Ascending aorta (tissue), 2 donors: ENCODE measurements at regions of chr15 and their contacts with region 1.

Region 1: GRCh38 chr15:80567721-80568157 is 127.4 kb upstream of the ABHD17C start:
- DNase-seq: peak in 1 of 2 donors; percentile 73
- H3K4me3 ChIP-seq: no peak overlapping the region
- H3K27ac ChIP-seq: no peak overlapping the region
- H3K4me1 ChIP-seq: no peaks in the 10 kb centered on the region
- H3K27me3 ChIP-seq: no peaks in the 10 kb centered on the region
- CTCF ChIP-seq: peak; percentile 53 to 70 (median 58)

Region 2: GRCh38 chr15:80447077-80447476 is 120.7 kb before region 1 on chr15:
- intact Hi-C with region 1: no loop called
- DNase-seq: no peak
- H3K4me3 ChIP-seq: no peak overlapping the region
- H3K27ac ChIP-seq: no peak overlapping the region
- H3K4me1 ChIP-seq: no peaks in the 10 kb centered on the region
- H3K27me3 ChIP-seq: no peaks in the 10 kb centered on the region
- CTCF ChIP-seq: no peak

Region 3: GRCh38 chr15:80507712-80508316 is 59.9 kb before region 1 on chr15:
- intact Hi-C with region 1: no loop called
- DNase-seq: no peak
- H3K4me3 ChIP-seq: no peak overlapping the region
- H3K27ac ChIP-seq: no peak overlapping the region
- H3K4me1 ChIP-seq: no peaks in the 10 kb centered on the region
- H3K27me3 ChIP-seq: no peaks in the 10 kb centered on the region
- CTCF ChIP-seq: no peak

Region 4: DNA sequence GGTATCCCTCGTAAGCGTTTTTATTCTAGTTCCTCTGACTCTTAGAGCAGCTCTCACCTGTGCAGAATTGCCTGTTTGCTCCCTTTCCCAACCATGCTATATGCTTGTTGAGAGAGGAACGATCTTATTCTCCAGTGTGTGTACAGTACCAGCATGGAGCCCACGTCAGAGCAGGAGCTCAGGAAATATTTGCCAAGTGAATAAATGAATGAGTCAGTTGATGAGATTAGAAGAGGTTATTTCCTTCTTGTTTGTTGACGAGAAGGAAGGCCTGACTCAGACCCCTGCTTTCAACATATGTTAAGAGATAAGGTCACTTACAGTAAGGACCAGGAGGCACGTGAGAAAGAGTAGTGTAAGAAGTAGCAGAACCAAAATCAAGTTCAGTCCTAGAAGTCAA is 21.1 kb after region 1 on chr15:
- intact Hi-C with region 1: no loop called
- DNase-seq: no peak
- H3K4me3 ChIP-seq: no peak overlapping the region
- H3K27ac ChIP-seq: no peak overlapping the region
- H3K4me1 ChIP-seq: no peaks in the 10 kb centered on the region
- H3K27me3 ChIP-seq: no peaks in the 10 kb centered on the region
- CTCF ChIP-seq: no peak

Region 5: DNA sequence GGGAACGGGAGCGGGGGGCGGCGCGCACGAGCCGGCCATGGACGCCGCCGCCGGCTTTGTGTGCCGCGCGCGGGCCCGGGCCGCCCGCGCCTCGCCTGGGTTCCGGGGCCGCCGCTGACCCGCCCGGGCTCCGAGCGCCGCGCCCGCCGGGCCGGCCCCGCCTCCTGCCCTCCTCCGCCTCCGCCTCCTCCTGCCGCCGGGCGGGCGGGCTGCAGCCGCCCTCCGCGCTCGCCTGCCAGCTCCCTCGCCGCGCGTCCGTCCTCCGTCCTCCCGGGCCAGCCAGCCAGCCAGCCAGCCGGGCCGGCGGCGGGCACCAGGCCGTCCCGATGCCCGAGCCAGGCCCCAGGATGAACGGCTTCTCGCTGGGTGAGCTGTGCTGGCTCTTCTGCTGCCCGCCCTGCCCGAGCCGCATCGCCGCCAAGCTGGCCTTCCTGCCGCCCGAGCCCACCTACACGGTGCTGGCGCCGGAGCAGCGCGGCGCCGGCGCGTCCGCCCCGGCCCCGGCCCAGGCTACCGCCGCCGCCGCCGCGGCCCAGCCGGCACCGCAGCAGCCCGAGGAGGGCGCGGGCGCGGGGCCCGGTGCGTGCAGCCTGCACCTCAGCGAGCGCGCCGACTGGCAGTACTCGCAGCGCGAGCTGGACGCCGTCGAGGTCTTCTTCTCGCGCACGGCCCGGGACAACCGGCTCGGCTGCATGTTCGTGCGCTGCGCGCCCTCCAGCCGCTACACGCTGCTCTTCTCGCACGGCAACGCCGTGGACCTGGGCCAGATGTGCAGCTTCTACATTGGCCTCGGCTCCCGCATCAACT is 127.6 kb after region 1 on chr15 and contains the start of gene ABHD17C:
- intact Hi-C with region 1: loop called (anchors 5 kb)
- DNase-seq: peak in 1 of 2 donors; percentile 69
- H3K4me3 ChIP-seq: peak within 1 kb of the TSS; percentile 80 to 85
- H3K27ac ChIP-seq: peak within 1 kb of the TSS; percentile 81 to 82
- H3K4me1 ChIP-seq: peaks cover 0 to 10% of the 10 kb centered on the region in 2 donors
- H3K27me3 ChIP-seq: no peaks in the 10 kb centered on the region
- CTCF ChIP-seq: no peak
- total RNA-seq, gene ABHD17C: 0.96 TPM

Region 6: GRCh38 chr15:80776420-80777045 is 208.8 kb after region 1 on chr15:
- intact Hi-C with region 1: loop called (anchors 1 kb)
- DNase-seq: peak in 1 of 2 donors; percentile 77
- H3K4me3 ChIP-seq: no peak overlapping the region
- H3K27ac ChIP-seq: no peak overlapping the region
- H3K4me1 ChIP-seq: peaks cover 14 to 21% of the 10 kb centered on the region in 2 donors
- H3K27me3 ChIP-seq: no peaks in the 10 kb centered on the region
- CTCF ChIP-seq: peak; percentile 59 to 78 (median 72)

Region 7: DNA sequence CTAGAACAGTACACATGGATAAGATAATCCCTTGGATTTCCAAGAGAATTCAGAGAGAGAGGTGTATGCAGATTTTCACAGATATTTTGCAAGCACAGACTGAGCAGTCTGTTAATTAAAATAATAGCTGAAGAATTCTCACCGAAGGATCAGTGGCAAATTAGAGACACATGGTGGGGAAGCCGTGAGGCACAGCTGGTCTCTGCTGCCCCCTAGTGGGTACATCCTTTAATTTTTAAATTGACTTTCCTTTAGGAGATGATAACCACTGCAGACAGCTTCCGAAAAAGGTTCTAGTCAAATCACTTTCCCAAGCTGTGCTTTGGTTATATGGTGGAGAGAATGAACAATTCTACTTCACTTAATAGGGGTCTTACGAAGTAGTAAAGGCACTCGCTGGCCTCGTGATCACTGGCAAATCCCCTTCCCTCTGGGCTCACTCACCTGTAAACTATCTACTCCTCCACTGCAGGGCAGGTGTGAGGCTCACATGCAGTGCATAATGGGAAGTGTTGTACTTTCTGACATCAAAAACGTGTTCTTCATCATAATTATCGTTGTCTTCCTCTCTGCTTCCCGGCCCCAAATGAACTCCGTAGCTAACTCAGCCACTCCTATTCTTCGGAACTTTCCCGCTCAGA is 402.4 kb after region 1 on chr15:
- intact Hi-C with region 1: loop called (anchors 2 kb)
- DNase-seq: peak in 1 of 2 donors; percentile 64
- H3K4me3 ChIP-seq: no peak overlapping the region
- H3K27ac ChIP-seq: no peak overlapping the region
- H3K4me1 ChIP-seq: no peaks in the 10 kb centered on the region
- H3K27me3 ChIP-seq: no peaks in the 10 kb centered on the region
- CTCF ChIP-seq: peak; percentile 79 to 87 (median 80)